ENCODE measurements at regions of chr2 and their contacts with region 1.

Region 1: GRCh38 chr2:27211829-27212627 is at the starts of genes ATRAID and SLC5A6:
- DNase-seq: peak; percentile 95
- ATAC-seq: peak; percentile 90
- H3K4me3 ChIP-seq: peak within 1 kb of the TSS; percentile 72 to 100 (median 90)
- H3K4me3 Mint-ChIP-seq: peak within 1 kb of the TSS; percentile 86
- H3K27ac ChIP-seq: peak within 1 kb of the TSS; percentile 100
- H3K27ac Mint-ChIP-seq: peak within 1 kb of the TSS; percentile 92
- H3K4me1 ChIP-seq: peaks cover 18 to 19% of the 10 kb centered on the region in 2 donors
- H3K4me1 Mint-ChIP-seq: peaks cover 33% of the 10 kb centered on the region
- H3K27me3 ChIP-seq: no peaks in the 10 kb centered on the region
- H3K27me3 Mint-ChIP-seq: no peaks in the 10 kb centered on the region
- CTCF ChIP-seq: no peak
- total RNA-seq, gene ATRAID: 88.8 and 89.9 TPM in 2 replicates
- total RNA-seq, gene SLC5A6: 46.1 and 50.8 TPM in 2 replicates

Region 2: DNA sequence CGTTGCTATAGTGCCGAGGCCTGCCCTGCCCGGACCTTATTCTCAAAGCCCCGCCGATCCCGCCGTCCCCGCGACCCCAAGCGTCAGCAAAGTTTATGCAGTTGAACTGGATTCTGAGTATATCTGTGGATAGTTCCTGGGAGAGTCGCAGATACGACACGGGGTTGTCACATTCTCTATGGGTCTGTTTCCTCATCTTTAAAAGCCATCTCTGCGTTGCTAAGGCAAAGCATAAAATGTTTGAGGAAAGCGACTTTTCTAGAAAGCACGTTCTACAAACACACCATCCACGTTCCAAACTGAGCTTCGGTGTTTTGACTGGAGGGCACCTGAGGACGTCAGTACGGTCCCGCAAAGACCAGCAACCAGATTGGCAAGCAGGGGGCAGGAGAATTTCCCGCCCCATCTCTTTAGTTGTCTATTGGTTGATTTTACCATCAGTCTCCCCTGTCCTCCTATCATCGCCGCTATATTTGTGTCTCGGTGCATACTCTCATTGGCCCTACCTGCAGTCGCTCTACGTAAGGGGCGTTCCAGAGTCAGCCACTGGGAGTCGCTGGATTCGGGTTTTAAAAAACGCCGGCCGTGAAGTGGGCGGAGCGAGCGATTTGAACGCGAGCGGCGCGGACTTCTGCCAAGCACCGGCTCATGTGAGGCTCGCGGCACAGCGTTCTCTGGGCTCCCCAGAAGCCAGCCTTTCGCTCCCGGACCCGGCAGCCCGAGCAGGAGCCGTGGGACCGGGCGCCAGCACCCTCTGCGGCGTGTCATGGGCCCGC is 426.4 kb before region 1 on chr2 and contains the start of gene CENPA:
- CTCF ChIA-PET with region 1: no interaction called
- POLR2A ChIA-PET with region 1: no interaction called
- intact Hi-C with region 1: loop called (anchors 5 kb)
- DNase-seq: peak; percentile 98
- ATAC-seq: peak; percentile 99
- H3K4me3 ChIP-seq: peak within 1 kb of the TSS; percentile 51 to 81 (median 71)
- H3K4me3 Mint-ChIP-seq: peak within 1 kb of the TSS; percentile 93
- H3K27ac ChIP-seq: peak within 1 kb of the TSS; percentile 27 to 41
- H3K27ac Mint-ChIP-seq: peak within 1 kb of the TSS; percentile 83
- H3K4me1 ChIP-seq: peaks cover 8 to 14% of the 10 kb centered on the region in 2 donors
- H3K4me1 Mint-ChIP-seq: peaks cover 13% of the 10 kb centered on the region
- H3K27me3 ChIP-seq: no peaks in the 10 kb centered on the region
- H3K27me3 Mint-ChIP-seq: peaks cover 3% of the 10 kb centered on the region
- CTCF ChIP-seq: peak; percentile 7
- total RNA-seq, gene CENPA: not detected in 2 replicates

Region 3: GRCh38 chr2:27016801-27017325 is 195.2 kb before region 1 on chr2:
- CTCF ChIA-PET with region 1: no interaction called
- POLR2A ChIA-PET with region 1: no interaction called
- intact Hi-C with region 1: no loop called
- DNase-seq: peak; percentile 63
- ATAC-seq: peak; percentile 57
- H3K4me3 ChIP-seq: no peak overlapping the region
- H3K4me3 Mint-ChIP-seq: no peak overlapping the region
- H3K27ac ChIP-seq: no peak overlapping the region
- H3K27ac Mint-ChIP-seq: no peak overlapping the region
- H3K4me1 ChIP-seq: no peaks in the 10 kb centered on the region
- H3K4me1 Mint-ChIP-seq: no peaks in the 10 kb centered on the region
- H3K27me3 ChIP-seq: no peaks in the 10 kb centered on the region
- H3K27me3 Mint-ChIP-seq: no peaks in the 10 kb centered on the region
- CTCF ChIP-seq: peak; percentile 71

Region 4: GRCh38 chr2:27032495-27033252 is 179.4 kb before region 1 on chr2 and contains the start of gene TMEM214:
- CTCF ChIA-PET with region 1: no interaction called
- POLR2A ChIA-PET with region 1: no interaction called
- intact Hi-C with region 1: loop called (anchors 1 kb)
- DNase-seq: peak; percentile 81
- ATAC-seq: peak; percentile 98
- H3K4me3 ChIP-seq: peak within 1 kb of the TSS; percentile 64 to 93 (median 78)
- H3K4me3 Mint-ChIP-seq: peak within 1 kb of the TSS; percentile 95
- H3K27ac ChIP-seq: peak within 1 kb of the TSS; percentile 72 to 78
- H3K27ac Mint-ChIP-seq: peak within 1 kb of the TSS; percentile 93
- H3K4me1 ChIP-seq: peaks cover 16 to 23% of the 10 kb centered on the region in 2 donors
- H3K4me1 Mint-ChIP-seq: peaks cover 29% of the 10 kb centered on the region
- H3K27me3 ChIP-seq: no peaks in the 10 kb centered on the region
- H3K27me3 Mint-ChIP-seq: no peaks in the 10 kb centered on the region
- CTCF ChIP-seq: no peak
- total RNA-seq, gene TMEM214: 91.1 and 97.0 TPM in 2 replicates

Region 5: GRCh38 chr2:27079233-27080139 is 132.5 kb before region 1 on chr2:
- CTCF ChIA-PET with region 1: interaction called, 3 read pairs
- POLR2A ChIA-PET with region 1: no interaction called
- intact Hi-C with region 1: loop called (anchors 2 kb)
- DNase-seq: no peak
- ATAC-seq: no peak
- H3K4me3 ChIP-seq: no peak overlapping the region
- H3K4me3 Mint-ChIP-seq: no peak overlapping the region
- H3K27ac ChIP-seq: no peak overlapping the region
- H3K27ac Mint-ChIP-seq: no peak overlapping the region
- H3K4me1 ChIP-seq: peaks cover 27 to 37% of the 10 kb centered on the region in 2 donors
- H3K4me1 Mint-ChIP-seq: peaks cover 37% of the 10 kb centered on the region
- H3K27me3 ChIP-seq: peaks cover 0 to 11% (median 4%) of the 10 kb centered on the region in 4 experiments
- H3K27me3 Mint-ChIP-seq: no peaks in the 10 kb centered on the region
- CTCF ChIP-seq: no peak

Region 6: GRCh38 chr2:27264753-27265535 is 52.9 kb after region 1 on chr2:
- CTCF ChIA-PET with region 1: interaction called, 3 read pairs
- POLR2A ChIA-PET with region 1: no interaction called
- intact Hi-C with region 1: loop called (anchors 1 kb)
- DNase-seq: peak; percentile 88
- ATAC-seq: peak; percentile 69
- H3K4me3 ChIP-seq: peak overlapping the region; percentile 23 to 68 (median 64)
- H3K4me3 Mint-ChIP-seq: peak overlapping the region; percentile 94
- H3K27ac ChIP-seq: peak overlapping the region in 1 of 2 donors; percentile 59
- H3K27ac Mint-ChIP-seq: no peak overlapping the region
- H3K4me1 ChIP-seq: peaks cover 35 to 38% of the 10 kb centered on the region in 2 donors
- H3K4me1 Mint-ChIP-seq: peaks cover 35% of the 10 kb centered on the region
- H3K27me3 ChIP-seq: peaks cover 0 to 69% (median 32%) of the 10 kb centered on the region in 4 experiments
- H3K27me3 Mint-ChIP-seq: peaks cover 47% of the 10 kb centered on the region
- CTCF ChIP-seq: peak; percentile 68